ENCODE measurements at regions of chr5 and their contacts with region 1.

Region 1: DNA sequence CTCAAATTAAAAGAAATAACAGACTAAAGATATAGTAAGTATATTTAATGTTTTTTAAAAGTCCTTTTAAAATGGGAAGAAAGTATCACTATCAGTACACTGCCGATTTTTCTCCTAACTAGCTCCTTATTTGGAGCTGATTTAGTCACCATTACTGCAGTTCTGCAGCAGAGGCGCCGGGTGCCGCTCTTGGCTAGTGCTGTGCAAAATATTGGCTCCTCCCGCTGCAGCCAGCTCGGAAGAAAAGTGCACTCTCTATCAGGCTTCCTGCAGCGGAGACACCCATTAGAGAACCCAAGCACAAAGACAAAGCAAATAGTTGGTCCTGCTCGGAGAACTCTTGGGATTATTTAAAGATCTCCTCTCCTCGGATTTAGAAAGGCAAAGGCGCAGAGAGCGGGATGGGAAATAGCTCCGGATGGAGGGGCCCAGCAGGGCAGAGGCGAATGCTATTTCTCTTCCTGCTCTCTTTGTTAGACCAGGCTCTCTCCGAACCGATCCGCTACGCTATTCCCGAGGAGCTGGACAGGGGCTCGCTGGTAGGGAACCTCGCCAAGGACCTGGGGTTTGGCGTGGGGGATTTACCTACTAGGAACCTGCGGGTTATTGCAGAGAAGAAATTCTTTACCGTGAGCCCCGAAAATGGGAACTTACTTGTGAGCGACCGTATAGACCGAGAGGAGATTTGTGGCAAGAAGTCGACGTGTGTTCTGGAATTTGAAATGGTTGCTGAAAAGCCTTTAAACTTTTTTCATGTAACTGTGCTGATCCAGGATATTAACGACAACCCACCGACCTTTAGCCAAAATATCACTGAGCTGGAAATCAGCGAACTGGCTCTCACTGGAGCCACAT is at the start of gene PCDHGB3:
- DNase-seq: peak in 1 of 2 donors; percentile 69
- ATAC-seq: peak; percentile 64 to 89 (median 82)
- H3K4me3 ChIP-seq: peak within 1 kb of the TSS; percentile 51
- H3K27ac ChIP-seq: no peak within 1 kb of the TSS
- H3K4me1 ChIP-seq: no peaks in the 10 kb centered on the region
- H3K27me3 ChIP-seq: peaks cover 0 to 67% (median 22%) of the 10 kb centered on the region in 3 donors
- CTCF ChIP-seq: peak; percentile 39
- total RNA-seq, gene PCDHGB3: 0.92 to 2.0 (median 1.2) TPM

Region 2: DNA sequence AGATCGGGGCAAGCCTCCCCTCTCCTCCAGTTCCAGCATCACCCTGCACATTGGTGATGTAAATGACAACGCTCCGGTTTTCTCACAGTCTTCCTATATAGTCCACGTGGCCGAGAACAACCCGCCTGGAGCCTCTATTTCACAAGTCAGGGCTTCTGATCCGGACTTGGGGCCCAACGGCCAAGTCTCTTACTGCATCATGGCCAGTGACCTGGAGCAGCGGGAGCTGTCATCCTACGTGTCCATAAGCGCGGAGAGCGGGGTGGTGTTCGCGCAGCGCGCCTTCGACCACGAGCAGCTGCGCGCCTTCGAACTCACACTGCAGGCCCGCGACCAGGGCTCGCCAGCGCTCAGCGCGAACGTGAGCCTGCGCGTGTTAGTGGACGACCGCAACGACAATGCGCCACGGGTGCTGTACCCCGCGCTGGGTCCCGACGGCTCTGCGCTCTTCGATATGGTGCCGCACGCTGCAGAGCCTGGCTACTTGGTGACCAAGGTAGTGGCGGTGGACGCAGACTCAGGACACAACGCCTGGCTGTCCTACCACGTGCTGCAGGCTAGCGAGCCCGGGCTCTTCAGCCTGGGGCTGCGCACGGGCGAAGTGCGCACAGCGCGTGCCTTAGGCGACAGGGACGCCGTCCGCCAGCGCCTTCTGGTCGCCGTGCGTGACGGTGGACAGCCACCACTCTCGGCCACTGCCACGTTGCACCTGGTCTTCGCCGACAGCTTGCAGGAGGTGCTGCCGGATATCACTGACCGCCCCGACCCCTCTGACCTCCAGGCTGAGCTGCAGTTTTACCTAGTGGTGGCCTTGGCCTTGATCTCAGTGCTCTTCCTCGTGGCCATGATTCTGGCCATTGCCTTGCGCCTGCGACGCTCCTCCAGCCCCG is 19.2 kb after region 1 on chr5:
- intact Hi-C with region 1: loop called in 1 of 2 experiments (anchors 2 kb)
- DNase-seq: no peak
- ATAC-seq: no peak
- H3K4me3 ChIP-seq: no peak overlapping the region
- H3K27ac ChIP-seq: no peak overlapping the region
- H3K4me1 ChIP-seq: no peaks in the 10 kb centered on the region
- H3K27me3 ChIP-seq: peaks cover 0 to 37% (median 13%) of the 10 kb centered on the region in 3 donors
- CTCF ChIP-seq: no peak

Region 3: DNA sequence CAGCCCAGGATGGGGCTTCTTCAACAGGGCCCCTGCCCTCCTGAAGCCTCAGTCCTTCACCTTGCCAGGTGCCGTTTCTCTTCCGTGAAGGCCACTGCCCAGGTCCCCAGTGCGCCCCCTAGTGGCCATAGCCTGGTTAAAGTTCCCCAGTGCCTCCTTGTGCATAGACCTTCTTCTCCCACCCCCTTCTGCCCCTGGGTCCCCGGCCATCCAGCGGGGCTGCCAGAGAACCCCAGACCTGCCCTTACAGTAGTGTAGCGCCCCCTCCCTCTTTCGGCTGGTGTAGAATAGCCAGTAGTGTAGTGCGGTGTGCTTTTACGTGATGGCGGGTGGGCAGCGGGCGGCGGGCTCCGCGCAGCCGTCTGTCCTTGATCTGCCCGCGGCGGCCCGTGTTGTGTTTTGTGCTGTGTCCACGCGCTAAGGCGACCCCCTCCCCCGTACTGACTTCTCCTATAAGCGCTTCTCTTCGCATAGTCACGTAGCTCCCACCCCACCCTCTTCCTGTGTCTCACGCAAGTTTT is 142.2 kb after region 1 on chr5:
- intact Hi-C with region 1: no loop called
- DNase-seq: peak; percentile 87 to 90
- ATAC-seq: peak; percentile 23 to 54 (median 35)
- H3K4me3 ChIP-seq: peak overlapping the region; percentile 61
- H3K27ac ChIP-seq: peak overlapping the region; percentile 90
- H3K4me1 ChIP-seq: peaks cover 61% of the 10 kb centered on the region
- H3K27me3 ChIP-seq: no peaks in the 10 kb centered on the region
- CTCF ChIP-seq: peak; percentile 83

Region 4: GRCh38 chr5:141713616-141714309 is 343.5 kb after region 1 on chr5:
- intact Hi-C with region 1: no loop called
- DNase-seq: no peak
- ATAC-seq: no peak
- H3K4me3 ChIP-seq: no peak overlapping the region
- H3K27ac ChIP-seq: no peak overlapping the region
- H3K4me1 ChIP-seq: no peaks in the 10 kb centered on the region
- H3K27me3 ChIP-seq: peaks cover 0 to 3% (median 0%) of the 10 kb centered on the region in 3 donors
- CTCF ChIP-seq: no peak

Measured in psoas muscle (tissue), 8 donors.